Adrenal gland (tissue), 19 donors: ENCODE measurements at regions of chr12 and their contacts with region 1.

Region 1: GRCh38 chr12:81450920-81451739 is 308.0 kb downstream of the PPFIA2 start:
- DNase-seq: peak in 6 of 7 donors; percentile 22 to 43 (median 33)
- H3K4me3 ChIP-seq: no peak overlapping the region
- H3K27ac ChIP-seq: no peak overlapping the region
- H3K4me1 ChIP-seq: no peaks in the 10 kb centered on the region
- H3K27me3 ChIP-seq: no peaks in the 10 kb centered on the region
- CTCF ChIP-seq: peak; percentile 37 to 57 (median 44)
- POLR2A ChIP-seq: no peak

Region 2: GRCh38 chr12:81627336-81628189 is 176.4 kb after region 1 on chr12:
- intact Hi-C with region 1: loop called in 1 of 2 experiments (anchors 10 kb)
- DNase-seq: peak in 1 of 7 donors; percentile 9
- H3K4me3 ChIP-seq: no peak overlapping the region
- H3K27ac ChIP-seq: no peak overlapping the region
- H3K4me1 ChIP-seq: no peaks in the 10 kb centered on the region
- H3K27me3 ChIP-seq: no peaks in the 10 kb centered on the region
- CTCF ChIP-seq: peak; percentile 35 to 68 (median 52)
- POLR2A ChIP-seq: no peak